HepG2 (cell line): ENCODE measurements at regions of chr12 and their contacts with region 1.

Region 1: DNA sequence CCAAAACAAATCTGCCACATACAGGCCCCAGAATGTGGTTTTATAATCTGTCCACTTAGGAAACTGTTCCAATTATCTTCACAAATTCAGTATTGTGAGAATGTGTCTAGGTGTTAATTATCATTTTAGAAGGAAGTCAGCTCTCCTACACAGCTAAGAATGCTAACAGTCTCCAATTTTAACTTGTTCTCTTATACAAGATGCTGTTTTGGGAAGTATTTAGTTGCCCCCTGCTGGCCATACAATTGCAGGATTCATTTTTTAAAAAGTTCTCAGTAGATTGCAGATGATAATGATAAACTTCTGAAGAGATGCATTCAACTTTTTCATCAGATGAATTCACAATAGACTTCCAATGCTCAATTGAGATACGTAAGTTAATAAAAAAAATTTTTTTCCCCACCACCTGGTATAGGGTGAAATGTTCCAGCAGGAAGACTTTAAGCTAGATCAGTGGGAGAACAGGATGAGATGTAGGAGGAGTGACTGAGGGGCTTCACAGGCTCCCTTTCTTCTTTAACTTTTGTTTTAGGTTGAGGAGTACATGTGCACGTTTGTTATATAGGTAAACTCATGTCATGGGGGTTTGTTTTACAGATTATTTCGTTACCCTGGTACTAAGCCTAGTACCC is 27.3 kb upstream of the OSBPL8 start:
- DNase-seq: peak; percentile 28
- ATAC-seq: peak; percentile 32; the same call in 2 of the 3 replicates
- H3K4me3 ChIP-seq: no peak overlapping the region
- H3K27ac ChIP-seq: no peak overlapping the region
- H3K4me1 ChIP-seq: no peaks in the 10 kb centered on the region
- H3K27me3 ChIP-seq: no peaks in the 10 kb centered on the region; a peak in 1 of 5 replicates
- CTCF ChIP-seq: peak; percentile 59
- EP300 ChIP-seq: no peak
- POLR2A ChIP-seq: no peak
- RAD21 ChIP-seq: no peak

Region 2: DNA sequence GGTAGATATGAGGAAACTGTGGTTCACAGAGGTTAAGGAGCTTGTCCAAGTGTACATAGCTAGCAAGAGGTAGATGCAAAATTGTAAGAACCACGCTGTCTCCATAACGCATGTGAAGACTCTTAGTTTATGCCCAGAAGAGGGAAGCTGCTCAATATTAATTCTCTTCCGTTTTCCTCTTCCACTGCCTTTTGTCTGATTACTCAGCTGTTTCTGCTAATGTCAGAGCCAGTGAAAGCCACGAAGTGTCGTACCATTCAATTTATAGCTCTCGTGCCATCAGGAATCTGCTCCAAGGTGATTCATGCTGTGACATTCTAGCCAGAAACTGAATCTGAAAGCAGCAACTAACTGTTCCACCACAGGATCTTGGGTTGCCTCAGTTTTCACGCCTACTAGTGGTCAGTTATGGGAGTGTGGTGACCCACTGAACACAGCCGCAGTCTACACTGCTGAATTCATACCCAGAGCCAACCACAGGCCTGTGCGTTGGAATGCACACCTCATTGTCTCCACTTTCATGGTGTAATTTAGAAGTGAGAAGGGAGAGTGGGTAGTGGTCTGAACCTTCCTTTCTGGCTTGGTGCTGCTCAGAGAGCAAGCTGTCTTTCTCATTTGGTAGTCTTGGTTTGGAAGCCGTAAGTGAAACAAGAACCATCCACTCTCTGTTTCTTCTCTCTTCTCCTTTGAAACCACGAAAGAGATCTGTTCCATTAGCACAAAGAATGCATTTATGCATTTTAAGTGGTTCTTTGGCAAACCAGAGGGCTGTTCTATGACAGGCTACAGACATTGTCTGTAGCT is 428.2 kb before region 1 on chr12:
- CTCF ChIA-PET with region 1: no interaction called
- POLR2A ChIA-PET with region 1: no interaction called
- in situ Hi-C with region 1: no loop called
- intact Hi-C with region 1: loop called (anchors 1 kb)
- DNase-seq: peak; percentile 53
- ATAC-seq: peak; percentile 100
- H3K4me3 ChIP-seq: peak overlapping the region in 1 of 3 experiments; percentile 39; a peak in 1 of 6 replicates
- H3K27ac ChIP-seq: no peak overlapping the region
- H3K4me1 ChIP-seq: 0 out of 2 replicates have a peak, but pooled peaks cover 4% of the 10 kb centered on the region
- H3K27me3 ChIP-seq: no peaks in the 10 kb centered on the region; a peak in 1 of 5 replicates
- CTCF ChIP-seq: peak; percentile 85
- EP300 ChIP-seq: no peak
- POLR2A ChIP-seq: no peak
- RAD21 ChIP-seq: no peak; the same call in 1 of the 2 replicates

Region 3: GRCh38 chr12:76470028-76470939 is 116.6 kb before region 1 on chr12:
- CTCF ChIA-PET with region 1: no interaction called
- POLR2A ChIA-PET with region 1: no interaction called
- in situ Hi-C with region 1: no loop called
- intact Hi-C with region 1: loop called (anchors 10 kb)
- DNase-seq: no peak
- ATAC-seq: no peak
- H3K4me3 ChIP-seq: no peak overlapping the region
- H3K27ac ChIP-seq: no peak overlapping the region
- H3K4me1 ChIP-seq: no peaks in the 10 kb centered on the region
- H3K27me3 ChIP-seq: no peaks in the 10 kb centered on the region
- CTCF ChIP-seq: no peak
- EP300 ChIP-seq: no peak
- POLR2A ChIP-seq: no peak
- RAD21 ChIP-seq: no peak

Region 4: GRCh38 chr12:76515262-76515661 is 71.6 kb before region 1 on chr12:
- CTCF ChIA-PET with region 1: no interaction called
- POLR2A ChIA-PET with region 1: no interaction called
- in situ Hi-C with region 1: no loop called
- intact Hi-C with region 1: loop called (anchors 1 kb)
- DNase-seq: no peak
- ATAC-seq: peak; percentile 42; the same call in 2 of the 3 replicates
- H3K4me3 ChIP-seq: no peak overlapping the region
- H3K27ac ChIP-seq: no peak overlapping the region
- H3K4me1 ChIP-seq: no peaks in the 10 kb centered on the region
- H3K27me3 ChIP-seq: no peaks in the 10 kb centered on the region
- CTCF ChIP-seq: 0 out of 2 replicates have a peak, but pooled peaks have one; percentile 19
- EP300 ChIP-seq: no peak
- POLR2A ChIP-seq: no peak
- RAD21 ChIP-seq: no peak

Region 5: DNA sequence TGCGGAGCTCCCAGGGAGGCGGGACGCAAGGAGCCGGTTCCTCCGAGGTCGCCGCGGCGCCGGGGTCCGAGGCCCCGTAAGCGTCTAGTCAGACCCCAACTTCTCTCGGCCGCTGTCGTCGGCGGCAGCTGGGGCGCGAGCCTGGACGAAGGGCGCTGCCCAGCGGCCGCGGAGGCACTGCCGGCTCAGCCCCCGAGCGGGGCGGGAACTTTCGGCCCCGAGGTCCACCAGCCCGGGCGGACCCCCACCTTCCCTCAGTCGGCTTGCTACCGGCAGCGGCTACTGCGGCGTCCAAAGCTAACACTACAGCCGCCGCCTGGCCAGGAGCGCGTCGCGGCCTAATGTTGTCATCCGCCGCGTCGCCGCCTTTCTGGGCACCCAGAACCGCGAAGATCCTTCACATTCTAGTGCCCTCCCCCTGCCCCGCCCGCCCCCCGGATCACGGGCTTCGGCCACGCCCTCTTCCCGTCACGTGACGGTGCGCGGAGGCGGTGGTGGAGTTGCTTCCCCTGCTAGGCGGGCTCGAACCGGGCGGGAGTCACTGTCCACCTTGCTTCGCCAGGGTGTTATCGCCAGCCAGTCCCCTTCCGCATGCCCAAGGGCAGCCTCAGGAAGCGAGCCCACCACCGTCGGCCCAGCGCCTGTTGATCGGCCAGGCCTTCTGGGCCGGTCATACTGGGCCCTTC is 27.3 kb before region 1 on chr12 and contains the start of gene OSBPL8:
- CTCF ChIA-PET with region 1: no interaction called
- POLR2A ChIA-PET with region 1: no interaction called
- in situ Hi-C with region 1: no loop called
- intact Hi-C with region 1: loop called (anchors 2 kb)
- DNase-seq: peak; percentile 89
- ATAC-seq: peak; percentile 94
- H3K4me3 ChIP-seq: peak within 1 kb of the TSS; percentile 82 to 100 (median 96)
- H3K27ac ChIP-seq: peak within 1 kb of the TSS; percentile 94
- H3K4me1 ChIP-seq: peaks cover 24% of the 10 kb centered on the region
- H3K27me3 ChIP-seq: no peaks in the 10 kb centered on the region; a peak in 1 of 5 replicates
- CTCF ChIP-seq: peak; percentile 63
- EP300 ChIP-seq: no peak
- POLR2A ChIP-seq: peak; percentile 94 to 99
- RAD21 ChIP-seq: peak; percentile 68
- total RNA-seq, gene OSBPL8: 33.9 and 63.9 TPM in 2 replicates

Region 6: DNA sequence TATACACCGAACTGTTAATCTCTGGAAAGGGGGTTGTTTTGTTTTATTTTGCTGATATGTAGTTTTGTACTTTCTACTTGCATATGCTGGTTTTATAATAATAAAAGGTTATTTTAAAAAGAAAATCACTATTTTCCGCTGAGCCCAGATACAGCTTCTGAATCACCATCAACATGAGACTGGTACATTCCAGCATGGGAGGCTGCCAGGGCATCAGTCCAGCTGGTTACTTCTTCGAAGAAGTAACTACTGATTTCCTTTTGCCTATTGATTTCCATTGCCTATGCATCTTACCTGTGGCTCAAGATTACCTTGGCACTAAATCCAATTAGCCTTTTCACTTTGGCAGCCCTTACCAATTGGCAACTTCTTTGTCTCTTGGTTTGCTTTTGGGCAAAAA is 15.6 kb before region 1 on chr12:
- CTCF ChIA-PET with region 1: no interaction called
- POLR2A ChIA-PET with region 1: no interaction called
- in situ Hi-C with region 1: no loop called
- intact Hi-C with region 1: no loop called
- DNase-seq: no peak
- ATAC-seq: no peak
- H3K4me3 ChIP-seq: no peak overlapping the region
- H3K27ac ChIP-seq: no peak overlapping the region
- H3K4me1 ChIP-seq: no peaks in the 10 kb centered on the region
- H3K27me3 ChIP-seq: no peaks in the 10 kb centered on the region
- CTCF ChIP-seq: no peak
- EP300 ChIP-seq: no peak
- POLR2A ChIP-seq: no peak
- RAD21 ChIP-seq: no peak